Gastrocnemius medialis (tissue), 4 donors: ENCODE measurements at regions of chr1 and their contacts with region 1.

Region 1: DNA sequence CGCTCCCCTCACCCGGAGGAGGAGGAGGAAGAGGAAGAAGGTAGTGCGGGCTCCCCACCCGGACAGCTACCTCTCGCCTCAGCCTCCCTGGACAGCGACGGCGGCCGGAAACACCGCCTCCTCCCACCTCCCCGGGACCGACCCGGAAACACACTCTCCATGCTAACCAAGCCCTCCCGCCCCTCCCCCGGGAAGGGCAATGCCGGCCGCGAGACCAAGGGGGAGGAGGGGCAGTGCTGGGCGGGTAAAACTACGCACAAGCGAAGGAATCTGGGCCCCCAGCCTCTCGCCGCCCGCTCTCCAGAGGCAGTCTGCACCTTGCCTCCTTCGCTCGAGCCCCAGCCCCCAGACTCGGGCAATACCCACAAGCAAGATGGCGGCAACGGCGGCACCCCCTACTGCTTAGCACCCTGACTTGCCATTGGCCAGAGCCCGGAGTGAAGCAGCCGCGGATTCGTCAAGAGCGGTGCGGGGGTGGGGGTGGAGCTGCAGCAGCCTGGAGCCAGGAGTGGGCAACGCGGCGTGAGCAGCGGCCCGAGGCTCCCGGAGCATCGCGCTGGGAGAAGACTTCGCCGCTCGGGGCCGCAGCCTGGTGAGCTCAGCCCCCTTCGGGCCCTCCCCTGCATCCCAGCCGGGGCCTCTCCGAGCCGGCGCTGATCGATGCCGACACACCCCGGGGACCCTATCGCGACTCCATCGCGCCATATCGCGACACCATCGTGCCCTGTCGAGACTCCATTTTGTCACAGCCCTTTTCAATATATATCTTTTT is at the starts of genes KIAA0319L and NCDN:
- DNase-seq: peak; percentile 97
- ATAC-seq: peak; percentile 94 to 97
- H3K4me3 ChIP-seq: peak within 1 kb of the TSS; percentile 84 to 99 (median 98)
- H3K27ac ChIP-seq: peak within 1 kb of the TSS; percentile 91 to 100 (median 99)
- H3K4me1 ChIP-seq: peaks cover 45 to 69% of the 10 kb centered on the region in 2 donors
- H3K27me3 ChIP-seq: no peaks in the 10 kb centered on the region
- CTCF ChIP-seq: peak in 1 of 5 experiments; percentile 12
- POLR2A ChIP-seq: peak; percentile 68 to 81
- total RNA-seq, gene KIAA0319L: 44.4 to 85.0 (median 69.2) TPM
- total RNA-seq, gene NCDN: 8.7 to 16.8 (median 14.0) TPM

Region 2: GRCh38 chr1:35715568-35716002 is 158.1 kb after region 1 on chr1:
- in situ Hi-C with region 1: loop called in 2 of 4 experiments (anchors 10 kb)
- intact Hi-C with region 1: loop called (anchors 5 kb)
- DNase-seq: peak in 1 of 2 donors; percentile 48
- ATAC-seq: peak in 1 of 2 donors; percentile 39
- H3K4me3 ChIP-seq: no peak overlapping the region
- H3K27ac ChIP-seq: no peak overlapping the region
- H3K4me1 ChIP-seq: peaks cover 21 to 22% of the 10 kb centered on the region in 2 donors
- H3K27me3 ChIP-seq: no peaks in the 10 kb centered on the region
- CTCF ChIP-seq: peak; percentile 33 to 74 (median 65)
- POLR2A ChIP-seq: no peak